ENCODE measurements at regions of chr9 and their contacts with region 1.

Region 1: GRCh38 chr9:109097146-109097545 is 22.6 kb downstream of the TMEM245 start:
- DNase-seq: no peak
- ATAC-seq: no peak

Region 2: DNA sequence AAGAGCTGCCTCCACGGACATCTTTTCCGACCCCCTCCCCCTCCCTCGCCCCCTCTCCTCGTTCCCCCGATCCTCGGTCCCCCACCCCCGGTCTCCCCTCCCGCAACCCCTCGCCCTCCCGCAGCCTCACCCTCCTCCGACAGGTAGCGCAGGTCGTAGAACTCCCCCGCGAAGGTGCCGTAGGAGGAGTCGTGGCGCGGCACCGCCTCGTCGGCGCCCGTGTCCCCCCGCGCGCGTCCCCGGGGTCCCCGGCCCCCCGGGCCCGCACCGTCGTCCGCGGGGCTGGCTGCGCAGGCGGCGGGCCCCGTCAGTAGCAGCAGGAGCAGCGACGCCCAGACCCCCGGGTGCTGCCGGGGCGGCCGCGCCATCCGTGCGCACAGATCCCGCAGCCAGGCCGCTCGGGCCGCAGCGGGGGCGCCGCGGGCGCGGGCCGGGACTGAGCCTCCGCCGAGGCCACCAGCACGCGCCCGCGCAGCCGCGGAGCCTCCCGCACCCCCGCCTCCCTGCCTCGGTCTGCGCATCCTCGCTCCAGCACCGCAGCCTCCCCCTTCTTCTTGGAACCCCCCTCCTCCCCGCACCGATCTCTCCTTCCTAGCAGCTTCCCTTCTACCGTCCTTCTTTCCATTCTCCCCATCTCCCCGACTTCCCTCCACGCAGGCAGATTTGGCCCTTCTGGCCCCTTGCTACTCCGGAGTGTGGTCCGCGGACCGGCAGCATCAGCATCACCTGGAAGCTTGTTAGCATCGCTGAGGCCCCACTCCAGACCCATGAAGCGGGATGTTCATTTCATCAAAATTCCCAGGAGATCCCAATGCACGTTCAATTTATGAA is 69.8 kb after region 1 on chr9 and contains the start of gene FRRS1L:
- intact Hi-C with region 1: loop called in 1 of 2 experiments (anchors 2 kb)
- DNase-seq: no peak
- ATAC-seq: peak; percentile 41 to 63
- total RNA-seq, gene FRRS1L: 4.4 to 5.7 TPM